IMR-90 (cell line): ENCODE measurements at regions of chr1 and their contacts with region 1.

Region 1: GRCh38 chr1:175154629-175155472 is 37.7 kb downstream of the KIAA0040 start:
- DNase-seq: peak; percentile 35
- ATAC-seq: peak; percentile 66
- H3K4me3 ChIP-seq: no peak overlapping the region
- H3K27ac ChIP-seq: no peak overlapping the region
- H3K4me1 ChIP-seq: no peaks in the 10 kb centered on the region
- H3K27me3 ChIP-seq: peaks cover 3% of the 10 kb centered on the region; the same call in 1 of the 2 replicates
- CTCF ChIP-seq: peak; percentile 72
- POLR2A ChIP-seq: no peak
- RAD21 ChIP-seq: peak; percentile 59

Region 2: GRCh38 chr1:175319418-175320230 is 164.8 kb after region 1 on chr1:
- CTCF ChIA-PET with region 1: interaction called, 11 read pairs
- POLR2A ChIA-PET with region 1: no interaction called
- dilution Hi-C with region 1: no loop called
- in situ Hi-C with region 1: loop called (anchors 5 kb)
- intact Hi-C with region 1: loop called (anchors 1 kb)
- DNase-seq: peak; percentile 60
- ATAC-seq: peak; percentile 62
- H3K4me3 ChIP-seq: no peak overlapping the region
- H3K27ac ChIP-seq: no peak overlapping the region
- H3K4me1 ChIP-seq: no peaks in the 10 kb centered on the region
- H3K27me3 ChIP-seq: no peaks in the 10 kb centered on the region
- CTCF ChIP-seq: peak; percentile 73
- POLR2A ChIP-seq: no peak
- RAD21 ChIP-seq: peak; percentile 69

Region 3: GRCh38 chr1:175887981-175888433 is 733.2 kb after region 1 on chr1:
- CTCF ChIA-PET with region 1: no interaction called
- POLR2A ChIA-PET with region 1: no interaction called
- dilution Hi-C with region 1: no loop called
- in situ Hi-C with region 1: no loop called
- intact Hi-C with region 1: loop called (anchors 10 kb)
- DNase-seq: peak; percentile 36
- ATAC-seq: peak; percentile 80
- H3K4me3 ChIP-seq: no peak overlapping the region
- H3K27ac ChIP-seq: no peak overlapping the region
- H3K4me1 ChIP-seq: peaks cover 4% of the 10 kb centered on the region
- H3K27me3 ChIP-seq: no peaks in the 10 kb centered on the region
- CTCF ChIP-seq: peak; percentile 70
- POLR2A ChIP-seq: no peak
- RAD21 ChIP-seq: peak; percentile 63

Region 4: DNA sequence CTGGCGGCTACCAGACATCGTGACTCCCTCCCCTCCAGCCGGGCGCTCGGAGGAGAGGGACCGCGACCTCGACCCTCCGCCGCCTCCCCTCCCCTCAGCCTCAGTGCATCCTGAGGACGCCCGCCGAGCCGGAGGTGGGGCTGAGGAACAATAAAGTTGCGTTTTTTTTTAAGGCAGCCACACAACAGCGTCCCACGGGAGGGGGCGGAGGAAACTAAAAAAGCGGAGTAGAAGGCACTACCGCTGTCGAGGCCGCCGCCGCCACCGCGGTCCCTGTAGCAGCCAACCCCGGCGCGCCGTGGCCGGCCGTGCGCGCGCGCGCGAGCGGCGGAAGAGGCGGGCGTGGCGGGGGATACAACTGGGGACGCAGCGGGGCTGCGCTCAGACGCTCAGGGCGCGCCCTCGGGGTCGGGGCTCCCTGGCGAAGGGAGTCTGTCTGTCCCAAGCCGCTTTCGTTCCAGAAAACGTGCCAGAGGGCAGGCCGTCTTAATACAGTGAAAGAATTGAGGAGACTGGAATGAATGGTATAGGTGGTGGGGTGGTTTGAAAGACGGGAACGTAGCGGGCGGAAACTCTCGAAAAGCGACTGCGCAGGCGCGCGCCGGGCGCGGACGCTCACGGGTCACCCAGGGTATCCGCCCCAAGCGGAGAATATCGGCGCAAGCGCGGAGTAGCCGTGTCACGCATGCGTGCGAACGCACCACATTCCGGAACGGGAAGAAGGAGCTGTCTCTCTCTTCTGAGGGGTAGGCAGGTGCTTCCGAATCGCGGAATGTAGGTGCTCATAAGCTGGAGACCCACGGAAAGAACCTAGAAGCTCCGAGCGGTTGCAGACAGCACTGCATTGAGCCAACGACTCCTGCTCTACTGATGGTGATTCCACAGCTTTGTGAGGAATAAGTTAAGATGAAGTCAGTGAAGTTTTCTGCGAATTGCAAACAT is 1052.4 kb after region 1 on chr1 and contains the start of gene COP1:
- CTCF ChIA-PET with region 1: no interaction called
- POLR2A ChIA-PET with region 1: no interaction called
- dilution Hi-C with region 1: no loop called
- in situ Hi-C with region 1: no loop called
- intact Hi-C with region 1: loop called (anchors 5 kb)
- DNase-seq: peak; percentile 93
- ATAC-seq: peak; percentile 92
- H3K4me3 ChIP-seq: peak within 1 kb of the TSS; percentile 76
- H3K27ac ChIP-seq: peak within 1 kb of the TSS; percentile 91
- H3K4me1 ChIP-seq: peaks cover 3% of the 10 kb centered on the region; the same call in 1 of the 2 replicates
- H3K27me3 ChIP-seq: no peaks in the 10 kb centered on the region
- CTCF ChIP-seq: no peak
- POLR2A ChIP-seq: peak; percentile 91
- RAD21 ChIP-seq: no peak
- total RNA-seq, gene COP1: 35.0 and 44.4 TPM in 2 replicates

Region 5: DNA sequence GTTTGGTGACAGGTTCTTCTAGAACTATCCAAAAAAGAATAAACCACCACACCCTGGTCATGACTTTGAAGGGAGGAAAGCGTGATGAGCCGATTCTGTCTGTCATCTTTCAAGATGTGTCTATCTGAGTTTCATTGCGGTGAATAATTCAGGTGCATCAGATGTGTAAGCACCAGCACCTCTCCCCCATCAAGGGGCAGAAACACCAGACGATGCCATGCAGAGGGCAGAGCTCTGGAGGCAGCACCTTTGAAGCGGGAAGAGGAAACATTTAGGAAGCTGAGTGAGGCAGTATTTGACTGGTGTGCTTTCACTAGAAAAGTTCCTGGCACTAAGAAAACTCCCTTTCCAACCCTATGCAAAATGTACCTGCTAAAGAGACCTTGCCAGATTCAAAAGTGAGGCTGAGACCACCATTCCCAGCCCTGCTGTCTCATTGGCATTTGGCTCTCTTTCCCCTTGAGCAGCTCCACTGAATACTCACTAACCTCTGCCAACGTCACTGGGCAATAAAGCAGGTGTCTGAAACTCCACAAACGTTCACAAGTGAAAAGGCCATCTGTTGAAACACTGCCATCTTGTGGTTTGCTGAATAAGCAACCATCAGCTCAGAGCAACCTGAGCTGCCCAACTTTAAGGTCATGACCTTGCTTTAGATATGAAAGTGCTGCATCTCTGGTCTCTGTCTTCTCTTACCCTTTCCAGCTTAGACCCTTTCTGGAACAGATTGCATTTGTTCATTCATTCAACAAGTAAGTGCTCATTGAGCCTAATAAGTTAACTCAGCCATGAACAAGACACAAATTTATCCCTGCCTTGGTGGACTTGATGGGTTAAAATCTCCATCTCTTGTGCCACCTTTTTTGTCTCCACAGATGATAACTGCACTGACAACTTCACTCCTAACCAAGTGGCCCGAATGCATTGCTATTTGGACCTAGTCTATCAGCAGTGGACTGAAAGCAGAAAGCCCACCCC is 1536.7 kb after region 1 on chr1:
- CTCF ChIA-PET with region 1: no interaction called
- POLR2A ChIA-PET with region 1: no interaction called
- dilution Hi-C with region 1: no loop called
- in situ Hi-C with region 1: no loop called
- intact Hi-C with region 1: loop called (anchors 2 kb)
- DNase-seq: peak; percentile 43
- ATAC-seq: peak; percentile 56
- H3K4me3 ChIP-seq: no peak overlapping the region
- H3K27ac ChIP-seq: no peak overlapping the region
- H3K4me1 ChIP-seq: no peaks in the 10 kb centered on the region
- H3K27me3 ChIP-seq: no peaks in the 10 kb centered on the region
- CTCF ChIP-seq: peak; percentile 58
- POLR2A ChIP-seq: no peak
- RAD21 ChIP-seq: peak; percentile 50

Region 6: GRCh38 chr1:176857632-176858031 is 1702.8 kb after region 1 on chr1:
- CTCF ChIA-PET with region 1: no interaction called
- POLR2A ChIA-PET with region 1: no interaction called
- dilution Hi-C with region 1: no loop called
- in situ Hi-C with region 1: loop called (anchors 25 kb)
- intact Hi-C with region 1: no loop called
- DNase-seq: no peak
- ATAC-seq: no peak
- H3K4me3 ChIP-seq: no peak overlapping the region
- H3K27ac ChIP-seq: no peak overlapping the region
- H3K4me1 ChIP-seq: no peaks in the 10 kb centered on the region
- H3K27me3 ChIP-seq: no peaks in the 10 kb centered on the region
- CTCF ChIP-seq: no peak
- POLR2A ChIP-seq: no peak
- RAD21 ChIP-seq: no peak